CD8-positive, alpha-beta memory T cell (primary cell): ENCODE measurements at regions of chr11 and their contacts with region 1.

Region 1: GRCh38 chr11:114439229-114440120 is at the start of gene REXO2:
- DNase-seq: peak; percentile 90 to 95 (median 92)
- H3K4me3 ChIP-seq: peak within 1 kb of the TSS; percentile 94
- H3K4me3 Mint-ChIP-seq: peak within 1 kb of the TSS; percentile 94 to 100 (median 98)
- H3K27ac ChIP-seq: peak within 1 kb of the TSS; percentile 73
- H3K27ac Mint-ChIP-seq: peak within 1 kb of the TSS; percentile 79 to 96 (median 94)
- H3K4me1 ChIP-seq: peaks cover 15% of the 10 kb centered on the region
- H3K4me1 Mint-ChIP-seq: peaks cover 29 to 47% (median 42%) of the 10 kb centered on the region in 3 donors
- H3K27me3 ChIP-seq: no peaks in the 10 kb centered on the region
- H3K27me3 Mint-ChIP-seq: no peaks in the 10 kb centered on the region
- total RNA-seq, gene REXO2: 77.7 to 79.8 TPM

Region 2: DNA sequence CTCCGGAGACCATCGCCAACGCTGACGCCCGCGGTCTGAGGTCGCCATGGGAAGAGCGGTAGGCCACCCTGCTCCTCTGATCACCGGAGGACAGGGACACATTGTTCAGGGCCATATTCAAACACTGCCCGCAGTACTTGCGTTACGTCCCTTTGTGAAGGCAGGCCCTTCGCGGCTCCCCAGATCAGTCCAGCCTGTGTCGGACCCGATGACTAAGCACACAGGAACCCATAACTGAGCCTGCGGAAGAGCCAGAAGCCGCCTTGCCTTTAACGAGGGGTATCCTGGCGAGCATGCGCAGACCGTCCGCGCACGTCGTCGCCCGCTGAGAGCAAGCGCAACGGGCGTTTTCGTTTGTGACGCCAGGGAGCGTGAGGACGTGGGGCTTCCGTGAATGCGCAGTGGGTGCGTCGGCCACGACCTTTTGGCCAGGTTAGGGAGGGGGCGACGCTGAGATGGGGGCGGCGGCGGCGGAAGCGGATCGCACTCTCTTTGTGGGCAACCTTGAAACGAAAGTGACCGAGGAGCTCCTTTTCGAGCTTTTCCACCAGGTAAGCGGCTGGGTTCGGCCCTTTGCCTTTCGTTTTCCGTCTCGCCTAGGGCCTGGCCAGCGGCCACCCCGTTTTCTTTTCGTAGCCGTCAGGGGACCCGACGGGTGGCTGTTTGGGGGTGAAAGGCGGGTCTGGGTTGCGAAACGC is 39.1 kb before region 1 on chr11 and contains the starts of genes C11orf71 and RBM7:
- CTCF ChIA-PET with region 1: interaction called, 3 read pairs
- POLR2A ChIA-PET with region 1: interaction called, 10 read pairs
- DNase-seq: peak; percentile 95 to 99 (median 97)
- H3K4me3 ChIP-seq: peak within 1 kb of the TSS; percentile 91
- H3K4me3 Mint-ChIP-seq: peak within 1 kb of the TSS; percentile 95 to 99 (median 97)
- H3K27ac ChIP-seq: peak within 1 kb of the TSS; percentile 98
- H3K27ac Mint-ChIP-seq: peak within 1 kb of the TSS; percentile 95 to 100 (median 99)
- H3K4me1 ChIP-seq: peaks cover 54% of the 10 kb centered on the region
- H3K4me1 Mint-ChIP-seq: peaks cover 50 to 75% (median 69%) of the 10 kb centered on the region in 3 donors
- H3K27me3 ChIP-seq: no peaks in the 10 kb centered on the region
- H3K27me3 Mint-ChIP-seq: peaks cover 0 to 2% of the 10 kb centered on the region in 2 donors
- total RNA-seq, gene C11orf71: 8.2 to 9.3 TPM
- total RNA-seq, gene RBM7: 35.7 to 37.7 TPM

Region 3: GRCh38 chr11:114425921-114426679 is 13.4 kb before region 1 on chr11:
- CTCF ChIA-PET with region 1: no interaction called
- POLR2A ChIA-PET with region 1: no interaction called
- DNase-seq: no peak
- H3K4me3 ChIP-seq: no peak overlapping the region
- H3K4me3 Mint-ChIP-seq: no peak overlapping the region
- H3K27ac ChIP-seq: no peak overlapping the region
- H3K27ac Mint-ChIP-seq: no peak overlapping the region
- H3K4me1 ChIP-seq: no peaks in the 10 kb centered on the region
- H3K4me1 Mint-ChIP-seq: no peaks in the 10 kb centered on the region
- H3K27me3 ChIP-seq: no peaks in the 10 kb centered on the region
- H3K27me3 Mint-ChIP-seq: no peaks in the 10 kb centered on the region

Region 4: GRCh38 chr11:114909866-114910265 is 470.4 kb after region 1 on chr11:
- CTCF ChIA-PET with region 1: no interaction called
- POLR2A ChIA-PET with region 1: no interaction called
- DNase-seq: no peak
- H3K4me3 ChIP-seq: no peak overlapping the region
- H3K4me3 Mint-ChIP-seq: no peak overlapping the region
- H3K27ac ChIP-seq: no peak overlapping the region
- H3K27ac Mint-ChIP-seq: peak overlapping the region in 1 of 8 donors; percentile 67
- H3K4me1 ChIP-seq: no peaks in the 10 kb centered on the region
- H3K4me1 Mint-ChIP-seq: no peaks in the 10 kb centered on the region
- H3K27me3 ChIP-seq: no peaks in the 10 kb centered on the region
- H3K27me3 Mint-ChIP-seq: peaks cover 2 to 3% of the 10 kb centered on the region in 2 donors